ENCODE measurements at regions of chr2 and their contacts with region 1.

Region 1: GRCh38 chr2:223993621-223994232 is 36.5 kb downstream of the MRPL44 start:
- DNase-seq: peak; percentile 81
- H3K4me3 Mint-ChIP-seq: no peak overlapping the region
- H3K27ac Mint-ChIP-seq: peak overlapping the region; percentile 9
- H3K4me1 Mint-ChIP-seq: peaks cover 11% of the 10 kb centered on the region
- H3K27me3 Mint-ChIP-seq: no peaks in the 10 kb centered on the region
- CTCF ChIP-seq: peak; percentile 73

Region 2: DNA sequence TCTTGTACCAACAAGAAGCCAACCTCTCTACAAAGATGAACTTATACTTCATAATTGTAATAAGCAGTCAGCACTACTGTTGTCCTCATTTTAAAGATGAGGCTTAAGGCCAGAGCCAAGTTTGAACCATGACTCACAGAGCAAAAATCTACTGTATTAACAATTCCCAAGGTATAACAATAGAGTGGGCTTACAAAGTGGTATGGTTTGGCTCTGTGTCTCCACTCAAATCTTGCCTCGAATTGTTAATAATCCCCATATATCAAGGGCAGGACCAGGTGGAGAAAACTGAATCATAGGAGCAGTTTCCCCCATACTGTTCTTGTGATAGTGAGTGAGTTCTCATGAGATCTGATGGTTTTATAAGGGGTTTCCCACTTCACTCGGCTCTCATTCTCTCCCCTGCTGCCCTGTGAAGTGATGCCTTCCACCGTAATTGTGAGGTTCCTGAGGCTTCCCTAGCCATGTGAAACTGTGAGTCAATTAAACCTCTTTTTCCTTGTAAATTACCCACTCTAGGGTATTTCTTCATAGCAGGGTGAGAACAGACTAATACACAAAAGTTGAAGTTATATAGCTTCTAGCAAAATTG is 17.0 kb before region 1 on chr2:
- CTCF ChIA-PET with region 1: interaction called, 126 read pairs
- POLR2A ChIA-PET with region 1: interaction called, 3 read pairs
- intact Hi-C with region 1: no loop called
- DNase-seq: peak; percentile 18
- H3K4me3 Mint-ChIP-seq: no peak overlapping the region
- H3K27ac Mint-ChIP-seq: no peak overlapping the region
- H3K4me1 Mint-ChIP-seq: no peaks in the 10 kb centered on the region
- H3K27me3 Mint-ChIP-seq: no peaks in the 10 kb centered on the region
- CTCF ChIP-seq: no peak

Region 3: GRCh38 chr2:224039124-224039940 is 45.6 kb after region 1 on chr2 and contains the start of gene SERPINE2:
- CTCF ChIA-PET with region 1: interaction called, 27 read pairs
- POLR2A ChIA-PET with region 1: no interaction called
- intact Hi-C with region 1: loop called (anchors 1 kb)
- DNase-seq: peak; percentile 64
- H3K4me3 Mint-ChIP-seq: peak within 1 kb of the TSS; percentile 84
- H3K27ac Mint-ChIP-seq: peak within 1 kb of the TSS; percentile 10
- H3K4me1 Mint-ChIP-seq: peaks cover 28% of the 10 kb centered on the region
- H3K27me3 Mint-ChIP-seq: no peaks in the 10 kb centered on the region
- CTCF ChIP-seq: peak; percentile 30
- total RNA-seq, gene SERPINE2: 176 and 231 TPM in 2 replicates

Region 4: DNA sequence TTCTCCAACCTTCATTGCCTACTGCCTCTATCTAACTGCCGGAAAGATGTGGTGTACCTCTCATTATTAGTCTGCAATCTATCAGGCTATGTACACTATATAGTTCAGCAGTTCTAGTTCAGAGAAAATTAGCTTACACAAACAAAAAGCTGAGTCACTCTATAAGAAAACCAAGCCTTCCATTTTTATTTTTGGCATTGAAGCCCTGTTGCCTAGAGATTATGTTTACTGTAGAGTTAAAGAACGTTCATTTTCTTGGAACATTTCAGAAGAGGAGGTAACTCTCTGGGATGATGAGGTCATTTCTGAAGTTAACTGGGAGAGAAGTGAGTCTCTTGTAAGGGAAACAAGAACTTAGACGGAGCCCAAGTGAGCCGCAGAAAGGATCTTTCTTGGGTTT is 274.7 kb after region 1 on chr2:
- CTCF ChIA-PET with region 1: interaction called, 22 read pairs
- POLR2A ChIA-PET with region 1: interaction called, 3 read pairs
- intact Hi-C with region 1: no loop called
- DNase-seq: peak; percentile 76
- H3K4me3 Mint-ChIP-seq: no peak overlapping the region
- H3K27ac Mint-ChIP-seq: peak overlapping the region; percentile 76
- H3K4me1 Mint-ChIP-seq: peaks cover 8% of the 10 kb centered on the region
- H3K27me3 Mint-ChIP-seq: no peaks in the 10 kb centered on the region
- CTCF ChIP-seq: no peak

Region 5: GRCh38 chr2:224284134-224284946 is 290.6 kb after region 1 on chr2:
- CTCF ChIA-PET with region 1: interaction called, 455 read pairs
- POLR2A ChIA-PET with region 1: interaction called, 33 read pairs
- intact Hi-C with region 1: loop called (anchors 1 kb)
- DNase-seq: peak; percentile 65
- H3K4me3 Mint-ChIP-seq: no peak overlapping the region
- H3K27ac Mint-ChIP-seq: no peak overlapping the region
- H3K4me1 Mint-ChIP-seq: no peaks in the 10 kb centered on the region
- H3K27me3 Mint-ChIP-seq: peaks cover 25% of the 10 kb centered on the region
- CTCF ChIP-seq: peak; percentile 85